MCF 10A (cell line): ENCODE measurements at regions of chr7 and their contacts with region 1.

Region 1: GRCh38 chr7:116687801-116688201 is 15.8 kb downstream of the MET start:
- DNase-seq: peak; percentile 76
- H3K4me3 Mint-ChIP-seq: peak overlapping the region; percentile 52
- H3K27ac Mint-ChIP-seq: peak overlapping the region; percentile 44
- H3K4me1 Mint-ChIP-seq: peaks cover 66% of the 10 kb centered on the region
- H3K27me3 Mint-ChIP-seq: no peaks in the 10 kb centered on the region
- CTCF ChIP-seq: no peak

Region 2: DNA sequence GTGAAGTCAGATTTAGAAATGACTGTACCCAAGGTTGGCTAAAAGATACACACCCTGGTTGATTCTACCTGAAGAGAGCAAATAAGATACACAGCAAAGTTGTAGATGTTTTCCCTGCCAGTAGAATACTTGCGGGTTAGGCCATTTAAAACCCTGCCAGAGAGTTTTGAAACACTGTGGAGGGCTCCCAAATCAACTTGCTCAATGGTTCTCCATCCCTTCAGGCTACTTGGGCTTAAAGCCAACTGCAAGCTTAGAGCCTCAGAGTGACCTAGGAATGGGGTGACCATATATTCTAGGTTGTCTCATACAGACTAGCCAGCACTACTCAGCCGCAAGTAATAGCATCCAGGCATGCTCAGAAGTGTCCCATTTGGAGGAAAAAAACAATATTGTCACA is 153.0 kb before region 1 on chr7:
- CTCF ChIA-PET with region 1: no interaction called
- POLR2A ChIA-PET with region 1: no interaction called
- intact Hi-C with region 1: no loop called
- DNase-seq: peak; percentile 88
- H3K4me3 Mint-ChIP-seq: peak overlapping the region; percentile 22
- H3K27ac Mint-ChIP-seq: peak overlapping the region; percentile 57
- H3K4me1 Mint-ChIP-seq: peaks cover 36% of the 10 kb centered on the region
- H3K27me3 Mint-ChIP-seq: no peaks in the 10 kb centered on the region
- CTCF ChIP-seq: no peak

Region 3: GRCh38 chr7:116698930-116699710 is 11.3 kb after region 1 on chr7:
- CTCF ChIA-PET with region 1: interaction called, 4 read pairs
- POLR2A ChIA-PET with region 1: interaction called, 35 read pairs
- intact Hi-C with region 1: no loop called
- DNase-seq: no peak
- H3K4me3 Mint-ChIP-seq: no peak overlapping the region
- H3K27ac Mint-ChIP-seq: no peak overlapping the region
- H3K4me1 Mint-ChIP-seq: peaks cover 20% of the 10 kb centered on the region
- H3K27me3 Mint-ChIP-seq: no peaks in the 10 kb centered on the region
- CTCF ChIP-seq: no peak

Region 4: GRCh38 chr7:116706668-116707126 is 18.9 kb after region 1 on chr7:
- CTCF ChIA-PET with region 1: interaction called, 4 read pairs
- POLR2A ChIA-PET with region 1: interaction called, 35 read pairs
- intact Hi-C with region 1: no loop called
- DNase-seq: peak; percentile 71
- H3K4me3 Mint-ChIP-seq: peak overlapping the region; percentile 68
- H3K27ac Mint-ChIP-seq: peak overlapping the region; percentile 89
- H3K4me1 Mint-ChIP-seq: peaks cover 59% of the 10 kb centered on the region
- H3K27me3 Mint-ChIP-seq: no peaks in the 10 kb centered on the region
- CTCF ChIP-seq: no peak

Region 5: GRCh38 chr7:117110480-117111337 is 422.9 kb after region 1 on chr7:
- CTCF ChIA-PET with region 1: no interaction called
- POLR2A ChIA-PET with region 1: no interaction called
- intact Hi-C with region 1: no loop called
- DNase-seq: no peak
- H3K4me3 Mint-ChIP-seq: no peak overlapping the region
- H3K27ac Mint-ChIP-seq: no peak overlapping the region
- H3K4me1 Mint-ChIP-seq: no peaks in the 10 kb centered on the region
- H3K27me3 Mint-ChIP-seq: no peaks in the 10 kb centered on the region
- CTCF ChIP-seq: no peak